GM12878 (cell line): ENCODE measurements at regions of chr14 and their contacts with region 1.

Region 1: DNA sequence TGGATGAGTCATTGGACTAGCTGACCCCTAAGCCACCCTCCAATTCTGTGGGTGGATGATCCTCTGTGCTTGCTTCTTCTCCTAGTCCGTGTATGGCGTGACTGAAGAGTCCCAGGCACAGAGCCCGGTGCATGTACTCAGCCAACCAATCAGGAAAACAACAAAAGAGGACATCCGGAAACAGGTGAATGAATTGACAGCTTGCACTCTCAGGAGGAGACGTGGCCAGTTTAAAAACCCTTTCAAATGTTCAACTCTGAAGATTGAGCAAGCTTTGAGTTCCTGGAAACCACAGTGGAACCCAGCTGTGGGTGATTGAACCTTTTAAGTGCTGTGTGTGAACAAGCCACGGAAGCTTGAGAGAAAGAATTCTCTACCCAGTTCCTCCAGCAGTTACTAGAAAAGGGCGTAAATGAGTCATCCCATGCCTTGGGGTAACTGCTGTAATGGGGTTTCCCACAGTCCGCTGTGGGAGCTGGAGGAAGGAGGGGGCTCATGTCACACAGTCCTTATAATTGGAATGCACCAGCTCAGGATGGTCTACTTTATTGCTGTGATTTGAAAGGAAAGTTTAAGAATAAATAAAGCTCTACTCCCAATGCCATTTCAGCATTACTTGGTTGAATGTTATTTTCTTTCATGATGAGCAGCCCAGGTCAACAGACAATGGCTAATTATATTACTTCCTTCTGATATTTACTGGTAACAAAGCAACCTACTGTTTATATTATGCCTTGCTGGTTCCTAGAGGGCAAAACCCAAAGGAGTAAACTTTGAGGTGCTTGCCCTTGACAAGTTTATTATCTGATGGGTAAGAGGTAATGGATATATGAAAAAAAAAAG is 417.0 kb downstream of the DPF3 start:
- DNase-seq: peak; percentile 100
- ATAC-seq: peak; percentile 86
- H3K4me3 ChIP-seq: 0 out of 2 replicates have a peak overlapping the region, but pooled peaks have one; percentile 24
- H3K27ac ChIP-seq: peak overlapping the region; percentile 93
- H3K4me1 ChIP-seq: peaks cover 56% of the 10 kb centered on the region
- H3K27me3 ChIP-seq: no peaks in the 10 kb centered on the region
- CTCF ChIP-seq: no peak
- EP300 ChIP-seq: peak; percentile 97
- POLR2A ChIP-seq: 0 out of 2 replicates have a peak, but pooled peaks have one; percentile 41
- RAD21 ChIP-seq: peak; percentile 32

Region 2: GRCh38 chr14:71956920-71957563 is 519.8 kb before region 1 on chr14:
- CTCF ChIA-PET with region 1: no interaction called
- POLR2A ChIA-PET with region 1: interaction called, 6 read pairs
- RAD21 ChIA-PET with region 1: no interaction called
- SMC1A ChIA-PET with region 1: interaction called, 10 read pairs
- in situ Hi-C with region 1: no loop called
- intact Hi-C with region 1: no loop called
- DNase-seq: peak; percentile 78
- ATAC-seq: peak; percentile 83
- H3K4me3 ChIP-seq: no peak overlapping the region
- H3K27ac ChIP-seq: peak overlapping the region; percentile 70
- H3K4me1 ChIP-seq: peaks cover 18% of the 10 kb centered on the region
- H3K27me3 ChIP-seq: no peaks in the 10 kb centered on the region
- CTCF ChIP-seq: no peak
- EP300 ChIP-seq: peak; percentile 88 to 99
- POLR2A ChIP-seq: no peak
- RAD21 ChIP-seq: no peak

Region 3: DNA sequence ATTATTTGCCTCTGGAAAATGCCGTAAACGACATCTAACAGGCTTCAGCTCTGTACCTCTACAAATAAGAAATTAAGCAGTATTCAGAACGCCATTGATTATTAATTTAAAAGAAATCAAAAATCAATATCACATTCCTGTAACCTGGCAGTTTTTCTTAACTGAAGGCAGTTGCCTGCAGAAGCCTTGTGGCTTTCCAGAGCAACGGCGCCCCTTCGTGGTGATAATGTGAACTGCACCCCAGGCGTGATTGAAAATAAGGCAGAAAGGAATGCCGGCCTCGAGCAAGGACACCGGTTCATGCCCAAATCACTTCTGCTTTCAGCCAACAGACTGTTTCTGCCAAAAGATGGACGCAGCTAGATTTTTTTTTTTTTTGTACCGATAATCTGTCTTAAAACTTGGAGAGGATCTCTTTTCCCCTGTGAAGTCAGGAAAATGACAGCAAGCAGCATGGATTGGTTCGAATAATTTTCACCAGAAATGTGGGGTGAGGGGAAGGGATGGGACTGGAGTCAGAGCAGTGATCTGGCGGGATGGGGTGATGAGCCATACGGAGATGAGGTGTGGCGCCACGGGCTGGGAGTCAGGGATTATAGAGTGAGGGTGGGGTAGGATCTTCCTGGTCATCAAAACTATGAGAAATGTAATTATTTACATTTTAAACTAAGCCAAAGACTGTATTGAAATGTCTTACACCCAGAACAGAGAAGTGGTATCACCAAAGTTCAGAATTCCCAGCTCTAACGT is 56.0 kb before region 1 on chr14:
- CTCF ChIA-PET with region 1: interaction called, 34 read pairs
- POLR2A ChIA-PET with region 1: no interaction called
- RAD21 ChIA-PET with region 1: interaction called, 4 read pairs
- SMC1A ChIA-PET with region 1: interaction called, 6 read pairs
- in situ Hi-C with region 1: no loop called
- intact Hi-C with region 1: no loop called
- DNase-seq: peak; percentile 49
- ATAC-seq: peak; percentile 83
- H3K4me3 ChIP-seq: no peak overlapping the region
- H3K27ac ChIP-seq: no peak overlapping the region
- H3K4me1 ChIP-seq: no peaks in the 10 kb centered on the region
- H3K27me3 ChIP-seq: no peaks in the 10 kb centered on the region
- CTCF ChIP-seq: peak; percentile 91 to 97 (median 95)
- EP300 ChIP-seq: no peak
- POLR2A ChIP-seq: no peak
- RAD21 ChIP-seq: peak; percentile 99

Region 4: DNA sequence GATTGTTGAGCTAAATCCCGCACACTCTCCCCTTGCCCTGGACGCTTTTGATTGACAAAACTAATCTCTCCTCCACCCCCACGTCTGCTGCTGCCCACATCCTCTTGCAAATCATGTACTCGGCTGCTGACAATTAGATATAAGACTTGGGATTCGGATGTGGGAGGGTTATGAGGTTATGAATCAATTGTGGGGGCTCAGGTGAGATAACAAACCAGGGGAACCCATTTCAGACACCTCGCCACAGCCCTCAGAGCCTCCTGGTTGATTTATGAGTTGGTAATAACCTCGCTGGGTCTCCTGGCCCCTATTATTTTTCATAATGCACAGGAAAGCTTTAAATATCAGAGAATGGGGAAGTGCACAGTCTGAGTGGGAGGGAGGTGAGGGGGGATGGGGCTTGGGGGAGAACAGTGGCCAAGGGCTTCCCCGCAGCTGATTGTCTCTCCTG is 32.9 kb before region 1 on chr14:
- CTCF ChIA-PET with region 1: interaction called, 37 read pairs
- POLR2A ChIA-PET with region 1: interaction called, 5 read pairs
- RAD21 ChIA-PET with region 1: interaction called, 5 read pairs
- SMC1A ChIA-PET with region 1: interaction called, 91 read pairs
- in situ Hi-C with region 1: no loop called
- intact Hi-C with region 1: no loop called
- DNase-seq: peak; percentile 28
- ATAC-seq: peak; percentile 66
- H3K4me3 ChIP-seq: no peak overlapping the region
- H3K27ac ChIP-seq: peak overlapping the region; percentile 31; the same call in 1 of the 2 replicates
- H3K4me1 ChIP-seq: peaks cover 27% of the 10 kb centered on the region
- H3K27me3 ChIP-seq: no peaks in the 10 kb centered on the region
- CTCF ChIP-seq: no peak
- EP300 ChIP-seq: peak in 1 of 2 experiments; percentile 24; a peak in 1 of 4 replicates
- POLR2A ChIP-seq: no peak
- RAD21 ChIP-seq: no peak

Region 5: GRCh38 chr14:72451054-72451972 is 25.6 kb before region 1 on chr14:
- CTCF ChIA-PET with region 1: interaction called, 37 read pairs
- POLR2A ChIA-PET with region 1: interaction called, 11 read pairs
- RAD21 ChIA-PET with region 1: interaction called, 23 read pairs
- SMC1A ChIA-PET with region 1: interaction called, 91 read pairs
- in situ Hi-C with region 1: no loop called
- intact Hi-C with region 1: loop called (anchors 1 kb)
- DNase-seq: peak; percentile 84
- ATAC-seq: peak; percentile 92
- H3K4me3 ChIP-seq: no peak overlapping the region
- H3K27ac ChIP-seq: peak overlapping the region; percentile 63
- H3K4me1 ChIP-seq: peaks cover 27% of the 10 kb centered on the region
- H3K27me3 ChIP-seq: no peaks in the 10 kb centered on the region
- CTCF ChIP-seq: no peak
- EP300 ChIP-seq: no peak; a peak in 1 of 4 replicates
- POLR2A ChIP-seq: no peak
- RAD21 ChIP-seq: no peak

Region 6: GRCh38 chr14:72495664-72496264 is 18.9 kb after region 1 on chr14:
- CTCF ChIA-PET with region 1: interaction called, 3 read pairs
- POLR2A ChIA-PET with region 1: interaction called, 10 read pairs
- RAD21 ChIA-PET with region 1: interaction called, 5 read pairs
- SMC1A ChIA-PET with region 1: interaction called, 34 read pairs
- in situ Hi-C with region 1: no loop called
- intact Hi-C with region 1: no loop called
- DNase-seq: no peak
- ATAC-seq: no peak
- H3K4me3 ChIP-seq: no peak overlapping the region
- H3K27ac ChIP-seq: no peak overlapping the region
- H3K4me1 ChIP-seq: peaks cover 5% of the 10 kb centered on the region; the same call in 1 of the 2 replicates
- H3K27me3 ChIP-seq: no peaks in the 10 kb centered on the region
- CTCF ChIP-seq: no peak
- EP300 ChIP-seq: no peak
- POLR2A ChIP-seq: no peak
- RAD21 ChIP-seq: no peak

Region 7: GRCh38 chr14:72801381-72801812 is 324.5 kb after region 1 on chr14:
- CTCF ChIA-PET with region 1: no interaction called
- POLR2A ChIA-PET with region 1: no interaction called
- RAD21 ChIA-PET with region 1: no interaction called
- SMC1A ChIA-PET with region 1: no interaction called
- in situ Hi-C with region 1: no loop called
- intact Hi-C with region 1: no loop called
- DNase-seq: no peak
- ATAC-seq: peak; percentile 65
- H3K4me3 ChIP-seq: no peak overlapping the region
- H3K27ac ChIP-seq: no peak overlapping the region
- H3K4me1 ChIP-seq: no peaks in the 10 kb centered on the region
- H3K27me3 ChIP-seq: no peaks in the 10 kb centered on the region
- CTCF ChIP-seq: no peak
- EP300 ChIP-seq: no peak
- POLR2A ChIP-seq: no peak
- RAD21 ChIP-seq: no peak

Region 8: GRCh38 chr14:72904840-72905561 is 428.1 kb after region 1 on chr14:
- CTCF ChIA-PET with region 1: interaction called, 4 read pairs
- POLR2A ChIA-PET with region 1: no interaction called
- RAD21 ChIA-PET with region 1: interaction called, 5 read pairs
- SMC1A ChIA-PET with region 1: interaction called, 13 read pairs
- in situ Hi-C with region 1: no loop called
- intact Hi-C with region 1: no loop called
- DNase-seq: no peak
- ATAC-seq: peak; percentile 83
- H3K4me3 ChIP-seq: no peak overlapping the region
- H3K27ac ChIP-seq: no peak overlapping the region
- H3K4me1 ChIP-seq: peaks cover 7% of the 10 kb centered on the region; the same call in 1 of the 2 replicates
- H3K27me3 ChIP-seq: no peaks in the 10 kb centered on the region
- CTCF ChIP-seq: peak; percentile 88 to 96 (median 95)
- EP300 ChIP-seq: no peak
- POLR2A ChIP-seq: no peak
- RAD21 ChIP-seq: peak; percentile 99